ENCODE measurements at regions of chr5 and their contacts with region 1.

Region 1: GRCh38 chr5:91383027-91383955 is at the start of gene ARRDC3:
- DNase-seq: peak; percentile 97
- H3K4me3 Mint-ChIP-seq: peak within 1 kb of the TSS; percentile 87
- H3K27ac Mint-ChIP-seq: peak within 1 kb of the TSS; percentile 100
- H3K4me1 Mint-ChIP-seq: peaks cover 23% of the 10 kb centered on the region
- H3K27me3 Mint-ChIP-seq: no peaks in the 10 kb centered on the region

Region 2: GRCh38 chr5:90932052-90932699 is 451.1 kb before region 1 on chr5:
- CTCF ChIA-PET with region 1: interaction called, 40 read pairs
- DNase-seq: peak; percentile 39
- H3K4me3 Mint-ChIP-seq: no peak overlapping the region
- H3K27ac Mint-ChIP-seq: no peak overlapping the region
- H3K4me1 Mint-ChIP-seq: no peaks in the 10 kb centered on the region
- H3K27me3 Mint-ChIP-seq: no peaks in the 10 kb centered on the region

Region 3: DNA sequence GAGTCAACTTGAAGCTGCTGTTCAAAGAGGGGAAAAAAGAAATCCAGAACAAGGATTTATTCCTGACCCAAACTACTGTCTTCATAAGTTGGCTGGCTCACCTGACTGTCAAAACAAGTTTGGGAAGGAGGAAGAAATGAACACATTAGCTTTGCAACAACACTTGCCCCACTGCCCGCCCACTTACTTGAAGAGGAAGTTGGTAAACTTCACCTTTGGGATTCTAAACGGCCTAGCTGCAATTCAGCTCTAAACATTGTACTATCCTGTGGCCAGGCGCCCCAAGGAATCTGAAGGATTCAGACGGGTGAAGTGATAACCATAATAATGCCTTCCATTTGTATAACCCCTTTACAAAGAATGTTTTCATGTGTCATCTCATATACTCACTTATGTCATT is 199.6 kb before region 1 on chr5:
- CTCF ChIA-PET with region 1: interaction called, 13 read pairs
- DNase-seq: no peak
- H3K4me3 Mint-ChIP-seq: no peak overlapping the region
- H3K27ac Mint-ChIP-seq: peak overlapping the region; percentile 58
- H3K4me1 Mint-ChIP-seq: peaks cover 19% of the 10 kb centered on the region
- H3K27me3 Mint-ChIP-seq: peaks cover 9% of the 10 kb centered on the region

Region 4: DNA sequence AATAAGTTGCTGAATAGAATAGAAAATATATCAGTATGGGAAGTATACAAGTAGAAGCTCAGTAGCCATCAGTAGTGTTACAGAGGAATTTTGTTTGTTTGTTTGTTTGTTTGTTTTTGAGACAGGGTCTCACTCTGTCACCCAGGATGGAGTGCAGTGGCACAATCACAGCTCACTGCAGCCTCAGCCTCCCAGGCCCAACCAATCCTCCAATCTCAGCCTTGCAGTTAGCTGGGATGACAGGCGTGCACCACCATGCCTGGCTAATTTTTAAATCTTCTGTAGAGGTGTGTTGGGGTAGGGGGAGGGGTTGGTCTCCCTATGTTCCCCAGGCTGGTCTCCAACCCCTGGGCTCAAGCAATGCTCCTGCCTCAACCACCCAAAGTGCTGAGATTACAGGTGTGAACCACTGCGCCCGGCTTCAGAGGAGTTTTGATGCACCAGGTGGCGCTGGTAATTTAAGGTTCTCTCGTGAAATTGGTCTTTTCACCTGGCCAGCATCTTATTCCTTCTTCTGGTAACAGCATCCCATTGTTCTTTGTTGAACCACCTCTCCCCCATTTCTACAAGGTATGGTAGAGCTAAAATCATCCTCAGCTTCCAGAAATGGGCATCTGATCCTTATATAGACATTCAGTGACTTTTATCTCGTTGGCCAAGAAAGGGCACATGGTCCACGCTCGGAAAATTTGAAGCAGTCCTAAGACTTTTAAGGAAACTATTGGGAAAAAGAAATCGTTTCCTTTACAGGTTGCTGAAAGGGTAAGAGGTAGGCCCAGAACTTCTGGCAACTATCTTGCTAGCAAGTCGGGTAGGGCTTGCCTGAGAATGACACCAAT is 157.2 kb before region 1 on chr5:
- CTCF ChIA-PET with region 1: interaction called, 122 read pairs
- DNase-seq: peak; percentile 74
- H3K4me3 Mint-ChIP-seq: no peak overlapping the region
- H3K27ac Mint-ChIP-seq: no peak overlapping the region
- H3K4me1 Mint-ChIP-seq: no peaks in the 10 kb centered on the region
- H3K27me3 Mint-ChIP-seq: peaks cover 17% of the 10 kb centered on the region

Region 5: GRCh38 chr5:91296691-91297143 is 86.6 kb before region 1 on chr5:
- CTCF ChIA-PET with region 1: no interaction called
- DNase-seq: no peak
- H3K4me3 Mint-ChIP-seq: no peak overlapping the region
- H3K27ac Mint-ChIP-seq: no peak overlapping the region
- H3K4me1 Mint-ChIP-seq: peaks cover 6% of the 10 kb centered on the region
- H3K27me3 Mint-ChIP-seq: peaks cover 8% of the 10 kb centered on the region

Region 6: DNA sequence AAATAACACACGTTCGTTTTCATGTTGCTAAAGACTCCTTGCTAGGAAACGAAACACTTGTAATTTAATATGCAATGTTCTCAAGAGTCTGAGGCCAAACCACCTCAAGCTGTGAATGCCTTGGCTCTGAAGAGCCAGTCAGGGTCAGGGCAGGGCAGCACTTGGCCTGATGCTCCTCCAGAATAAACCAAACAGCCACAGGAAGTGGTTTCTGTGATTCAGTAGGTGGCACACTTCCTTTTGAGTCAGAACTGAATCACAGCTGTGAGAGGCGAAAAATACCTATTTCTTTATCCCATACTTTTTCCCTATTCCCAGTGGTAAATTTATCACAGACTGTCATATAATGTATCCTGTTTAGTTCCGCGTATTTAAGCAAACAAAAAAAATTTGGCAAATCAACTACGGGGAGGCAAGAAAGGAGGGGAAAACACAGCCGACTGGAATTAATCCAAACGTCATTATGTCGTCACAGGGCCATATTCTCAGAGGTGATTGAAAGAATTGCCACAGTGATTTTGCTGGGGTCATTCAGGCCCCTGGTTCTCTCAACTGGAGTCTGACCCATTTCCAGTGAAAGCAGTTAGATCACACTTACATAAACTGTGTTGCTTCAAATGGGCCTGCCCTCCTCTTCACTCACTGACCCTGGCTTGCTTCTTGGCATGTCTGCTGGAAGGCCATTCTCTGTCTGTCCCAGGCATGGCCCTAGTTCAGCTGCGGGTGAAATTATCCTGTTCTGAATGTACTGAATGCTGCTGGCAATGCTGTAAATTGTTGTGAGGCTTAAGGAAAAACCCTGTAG is 71.4 kb before region 1 on chr5:
- CTCF ChIA-PET with region 1: interaction called, 33 read pairs
- DNase-seq: peak; percentile 76
- H3K4me3 Mint-ChIP-seq: peak overlapping the region; percentile 34
- H3K27ac Mint-ChIP-seq: peak overlapping the region; percentile 89
- H3K4me1 Mint-ChIP-seq: peaks cover 55% of the 10 kb centered on the region
- H3K27me3 Mint-ChIP-seq: peaks cover 4% of the 10 kb centered on the region

Region 7: DNA sequence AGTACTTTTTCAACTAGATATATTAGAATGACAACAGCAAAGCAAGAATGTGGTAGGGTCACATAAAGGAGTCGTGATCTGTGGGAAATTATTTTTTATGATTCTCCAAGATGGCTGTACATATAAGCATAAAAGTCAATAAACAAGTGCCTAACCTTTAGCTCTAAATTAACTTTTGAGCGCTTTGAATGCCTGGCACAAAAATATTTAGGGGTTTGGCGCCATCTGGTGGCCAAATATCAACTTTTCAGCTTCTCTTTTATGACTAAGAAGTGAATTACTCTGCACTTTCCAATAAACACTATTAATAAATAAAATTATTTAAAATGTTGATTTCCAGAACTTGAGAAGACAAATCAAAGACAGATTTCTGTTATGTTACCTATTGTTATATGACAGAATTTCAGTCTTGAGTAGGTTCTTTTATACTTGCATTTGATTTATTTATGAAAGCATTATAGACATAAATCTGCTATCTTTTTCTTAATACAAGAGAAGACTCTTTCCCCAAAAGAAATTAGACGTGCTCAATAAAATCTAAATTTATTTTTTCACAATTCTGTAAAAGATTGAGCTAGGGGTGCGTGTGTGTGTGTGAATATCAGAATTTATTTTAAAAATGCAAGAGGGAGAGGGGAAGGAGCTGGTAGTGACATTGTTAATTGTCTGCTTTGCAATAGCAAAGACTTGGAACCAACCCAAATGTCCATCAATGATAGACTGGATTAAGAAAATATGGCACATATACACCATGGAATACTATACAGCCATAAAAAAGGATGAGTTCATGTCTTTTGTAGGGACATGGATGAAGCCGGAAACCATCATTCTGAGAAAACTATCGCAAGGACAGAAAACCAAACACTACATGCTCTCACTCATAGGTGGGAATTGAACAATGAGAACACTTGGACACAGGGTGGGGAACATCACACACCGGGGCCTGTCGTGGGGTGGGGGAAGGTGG is 36.6 kb after region 1 on chr5:
- CTCF ChIA-PET with region 1: interaction called, 55 read pairs
- DNase-seq: peak; percentile 76
- H3K4me3 Mint-ChIP-seq: no peak overlapping the region
- H3K27ac Mint-ChIP-seq: no peak overlapping the region
- H3K4me1 Mint-ChIP-seq: peaks cover 2% of the 10 kb centered on the region
- H3K27me3 Mint-ChIP-seq: no peaks in the 10 kb centered on the region